Panc1 (cell line): ENCODE measurements at regions of chr4 and their contacts with region 1.

Region 1: GRCh38 chr4:165464813-165465381 is 86.1 kb downstream of the CPE start:
- DNase-seq: no peak
- ATAC-seq: peak; percentile 71; the same call in 1 of the 2 replicates
- H3K4me3 ChIP-seq: no peak overlapping the region
- H3K27ac ChIP-seq: no peak overlapping the region
- H3K4me1 ChIP-seq: no peaks in the 10 kb centered on the region
- H3K27me3 ChIP-seq: no peaks in the 10 kb centered on the region
- CTCF ChIP-seq: peak; percentile 67; the same call in 1 of the 2 replicates

Region 2: DNA sequence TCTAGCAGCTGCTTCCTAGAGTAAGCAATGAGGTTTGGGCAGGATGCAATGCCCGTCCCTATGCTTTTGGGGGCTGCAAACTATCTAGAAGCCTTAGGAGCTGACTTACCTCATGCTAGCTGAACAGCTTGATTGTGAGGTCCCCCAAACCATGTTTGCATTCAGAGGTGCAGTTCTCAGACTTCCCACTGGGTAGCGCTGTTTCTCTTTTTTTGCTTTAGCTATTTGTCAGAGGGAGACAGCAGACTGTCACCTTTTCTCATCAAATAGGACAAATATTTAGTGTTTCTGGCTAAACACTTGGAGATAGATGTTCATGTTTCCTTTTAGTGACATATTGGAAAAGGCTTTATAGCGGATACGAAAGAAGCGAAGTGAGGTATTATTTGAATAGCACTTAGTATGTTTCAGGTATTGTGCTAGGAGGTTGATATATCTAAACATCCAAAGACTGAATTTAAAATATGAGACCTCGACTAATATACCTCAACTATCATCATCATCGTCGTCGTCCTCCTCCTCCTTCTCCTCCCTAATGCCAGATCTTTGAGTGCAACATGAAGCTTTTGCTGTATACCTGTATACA is 333.6 kb before region 1 on chr4:
- CTCF ChIA-PET with region 1: interaction called, 4 read pairs
- POLR2A ChIA-PET with region 1: no interaction called
- in situ Hi-C with region 1: no loop called
- intact Hi-C with region 1: loop called (anchors 1 kb)
- DNase-seq: peak; percentile 55
- ATAC-seq: peak; percentile 87
- H3K4me3 ChIP-seq: no peak overlapping the region
- H3K27ac ChIP-seq: no peak overlapping the region
- H3K4me1 ChIP-seq: no peaks in the 10 kb centered on the region
- H3K27me3 ChIP-seq: no peaks in the 10 kb centered on the region; the same call in 1 of the 2 replicates
- CTCF ChIP-seq: peak; percentile 83

Region 3: GRCh38 chr4:165355900-165356300 is 109.0 kb before region 1 on chr4:
- CTCF ChIA-PET with region 1: interaction called, 3 read pairs
- POLR2A ChIA-PET with region 1: no interaction called
- in situ Hi-C with region 1: no loop called
- intact Hi-C with region 1: loop called (anchors 2 kb)
- DNase-seq: no peak
- ATAC-seq: peak; percentile 66; the same call in 1 of the 2 replicates
- H3K4me3 ChIP-seq: no peak overlapping the region
- H3K27ac ChIP-seq: no peak overlapping the region
- H3K4me1 ChIP-seq: no peaks in the 10 kb centered on the region
- H3K27me3 ChIP-seq: peaks cover under 1% of the 10 kb centered on the region
- CTCF ChIP-seq: peak; percentile 68

Region 4: GRCh38 chr4:165512424-165512823 is 47.5 kb after region 1 on chr4:
- CTCF ChIA-PET with region 1: no interaction called
- POLR2A ChIA-PET with region 1: no interaction called
- in situ Hi-C with region 1: no loop called
- intact Hi-C with region 1: no loop called
- DNase-seq: no peak
- ATAC-seq: no peak
- H3K4me3 ChIP-seq: no peak overlapping the region
- H3K27ac ChIP-seq: no peak overlapping the region
- H3K4me1 ChIP-seq: no peaks in the 10 kb centered on the region
- H3K27me3 ChIP-seq: no peaks in the 10 kb centered on the region
- CTCF ChIP-seq: no peak